Calu3 (cell line): ENCODE measurements at regions of chrX and their contacts with region 1.

Region 1: GRCh38 chrX:23394421-23394820 is 59.8 kb downstream of the PTCHD1 start:
- DNase-seq: no peak
- H3K4me3 Mint-ChIP-seq: no peak overlapping the region
- H3K27ac Mint-ChIP-seq: no peak overlapping the region
- H3K4me1 Mint-ChIP-seq: no peaks in the 10 kb centered on the region
- H3K27me3 Mint-ChIP-seq: peaks cover 13% of the 10 kb centered on the region
- CTCF ChIP-seq: no peak

Region 2: GRCh38 chrX:23373129-23373804 is 21.2 kb before region 1 on chrX:
- CTCF ChIA-PET with region 1: interaction called, 11 read pairs
- intact Hi-C with region 1: no loop called
- DNase-seq: no peak
- H3K4me3 Mint-ChIP-seq: no peak overlapping the region
- H3K27ac Mint-ChIP-seq: no peak overlapping the region
- H3K4me1 Mint-ChIP-seq: peaks cover 10% of the 10 kb centered on the region
- H3K27me3 Mint-ChIP-seq: no peaks in the 10 kb centered on the region
- CTCF ChIP-seq: no peak